ENCODE measurements at regions of chr1 and their contacts with region 1.

Region 1: DNA sequence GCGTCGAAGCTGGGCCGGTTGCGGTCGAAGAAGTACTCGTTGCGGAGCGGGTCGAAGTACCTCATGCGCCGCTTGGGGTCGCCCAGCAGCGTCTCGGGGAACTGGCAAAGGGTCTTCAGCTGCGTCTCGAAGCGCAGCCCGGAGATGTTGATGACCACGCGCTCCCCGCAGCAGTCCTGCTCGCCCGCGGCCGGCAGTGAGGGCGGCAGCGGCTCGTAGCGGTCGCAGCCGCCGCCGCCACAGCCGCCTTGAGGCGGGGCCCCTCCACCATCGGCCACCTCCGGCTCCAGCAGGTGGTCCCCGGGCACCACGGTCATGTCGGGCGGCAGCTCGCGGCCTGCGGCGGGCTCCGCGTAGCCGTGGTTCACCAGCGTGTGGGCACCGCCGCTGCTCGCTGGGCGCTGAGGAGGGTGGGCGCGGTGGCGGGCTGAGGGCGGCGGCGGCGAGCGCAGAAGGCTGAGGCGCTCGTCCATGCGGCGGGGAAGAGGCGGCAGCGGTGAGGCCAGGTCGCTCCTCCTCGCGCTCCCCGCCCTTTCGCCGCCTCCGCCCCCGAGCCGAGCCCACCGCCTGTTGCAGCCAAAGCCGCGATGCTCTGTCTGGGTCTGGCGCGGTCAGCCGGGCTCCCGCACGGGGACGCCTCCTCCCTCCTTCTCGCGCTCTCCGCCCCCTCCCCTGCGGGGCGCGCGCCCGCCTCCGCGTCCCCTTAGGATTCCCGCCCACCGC is at the start of gene KCNA3:
- DNase-seq: peak; percentile 52 to 87 (median 73)
- ATAC-seq: peak; percentile 42
- H3K4me3 ChIP-seq: peak within 1 kb of the TSS; percentile 75 to 97
- H3K4me3 Mint-ChIP-seq: peak within 1 kb of the TSS; percentile 100
- H3K27ac ChIP-seq: peak within 1 kb of the TSS; percentile 93 to 95
- H3K27ac Mint-ChIP-seq: peak within 1 kb of the TSS; percentile 99
- H3K4me1 ChIP-seq: peaks cover 22% of the 10 kb centered on the region
- H3K4me1 Mint-ChIP-seq: peaks cover 40% of the 10 kb centered on the region
- H3K27me3 ChIP-seq: no peaks in the 10 kb centered on the region
- H3K27me3 Mint-ChIP-seq: no peaks in the 10 kb centered on the region
- CTCF ChIP-seq: peak; percentile 28
- total RNA-seq, gene KCNA3: 83.6 to 85.1 TPM

Region 2: GRCh38 chr1:110619412-110620249 is 54.9 kb before region 1 on chr1:
- CTCF ChIA-PET with region 1: interaction called, 58 read pairs
- POLR2A ChIA-PET with region 1: interaction called, 24 read pairs
- intact Hi-C with region 1: loop called in 1 of 2 experiments (anchors 1 kb)
- DNase-seq: peak; percentile 79 to 96 (median 90)
- ATAC-seq: peak; percentile 84
- H3K4me3 ChIP-seq: peak overlapping the region; percentile 62 to 65
- H3K4me3 Mint-ChIP-seq: peak overlapping the region; percentile 89
- H3K27ac ChIP-seq: peak overlapping the region; percentile 58 to 73
- H3K27ac Mint-ChIP-seq: peak overlapping the region; percentile 89
- H3K4me1 ChIP-seq: peaks cover 28% of the 10 kb centered on the region
- H3K4me1 Mint-ChIP-seq: peaks cover 41% of the 10 kb centered on the region
- H3K27me3 ChIP-seq: peaks cover 0 to 4% of the 10 kb centered on the region in 2 experiments
- H3K27me3 Mint-ChIP-seq: no peaks in the 10 kb centered on the region
- CTCF ChIP-seq: peak; percentile 97

Region 3: GRCh38 chr1:110657351-110657750 is 17.1 kb before region 1 on chr1:
- CTCF ChIA-PET with region 1: interaction called, 5 read pairs
- POLR2A ChIA-PET with region 1: interaction called, 5 read pairs
- intact Hi-C with region 1: loop called in 1 of 2 experiments (anchors 1 kb)
- DNase-seq: no peak
- ATAC-seq: no peak
- H3K4me3 ChIP-seq: no peak overlapping the region
- H3K4me3 Mint-ChIP-seq: no peak overlapping the region
- H3K27ac ChIP-seq: no peak overlapping the region
- H3K27ac Mint-ChIP-seq: peak overlapping the region; percentile 27
- H3K4me1 ChIP-seq: peaks cover 9% of the 10 kb centered on the region
- H3K4me1 Mint-ChIP-seq: peaks cover 65% of the 10 kb centered on the region
- H3K27me3 ChIP-seq: no peaks in the 10 kb centered on the region
- H3K27me3 Mint-ChIP-seq: no peaks in the 10 kb centered on the region
- CTCF ChIP-seq: no peak

Region 4: DNA sequence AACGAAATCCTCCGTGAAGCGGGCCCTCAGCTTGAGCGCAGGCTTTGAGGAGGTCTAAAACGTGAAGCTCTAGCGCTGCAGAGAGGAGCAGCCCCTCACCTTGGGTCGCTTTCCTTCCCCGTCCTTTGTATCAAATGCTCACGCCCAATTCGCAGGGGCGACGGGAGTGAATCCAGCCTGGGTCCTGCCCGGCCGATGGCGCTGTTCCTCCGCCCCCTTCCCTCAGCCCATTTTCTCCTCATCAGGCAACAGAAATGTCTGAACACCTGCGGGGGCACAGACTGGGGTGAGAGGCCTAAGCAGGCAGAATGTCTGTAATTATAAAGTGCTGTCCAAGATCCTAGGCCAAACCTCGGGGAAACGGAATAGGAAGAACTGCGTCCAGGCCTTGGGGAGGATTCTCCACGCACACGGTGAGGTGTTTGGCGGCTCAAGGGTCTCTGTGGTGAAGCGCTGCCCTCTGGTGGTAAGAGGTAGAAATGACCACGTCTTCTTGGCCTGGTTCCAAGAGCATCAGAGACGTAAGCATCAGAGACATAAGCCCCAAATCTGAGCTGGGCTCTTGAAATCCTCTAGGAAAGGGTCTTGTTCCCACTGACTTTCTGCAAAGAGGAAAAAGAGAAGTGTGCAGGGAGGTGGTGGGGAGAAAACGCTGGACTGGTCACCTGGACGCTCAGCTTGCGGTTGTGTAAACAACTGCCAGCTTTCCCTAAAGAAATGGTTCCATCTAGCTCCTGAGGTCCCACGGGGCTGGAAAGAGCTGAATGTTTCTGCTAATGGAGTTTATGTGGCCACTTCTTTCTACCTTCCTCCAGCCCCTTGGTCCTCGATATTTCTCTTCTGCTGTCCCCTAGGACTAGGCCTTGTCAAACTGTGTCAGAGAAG is 106.3 kb after region 1 on chr1:
- CTCF ChIA-PET with region 1: interaction called, 6 read pairs
- POLR2A ChIA-PET with region 1: interaction called, 3 read pairs
- intact Hi-C with region 1: loop called in 1 of 2 experiments (anchors 5 kb)
- DNase-seq: peak; percentile 59 to 88 (median 76)
- ATAC-seq: peak; percentile 81
- H3K4me3 ChIP-seq: no peak overlapping the region
- H3K4me3 Mint-ChIP-seq: no peak overlapping the region
- H3K27ac ChIP-seq: no peak overlapping the region
- H3K27ac Mint-ChIP-seq: no peak overlapping the region
- H3K4me1 ChIP-seq: peaks cover 39% of the 10 kb centered on the region
- H3K4me1 Mint-ChIP-seq: peaks cover 46% of the 10 kb centered on the region
- H3K27me3 ChIP-seq: no peaks in the 10 kb centered on the region
- H3K27me3 Mint-ChIP-seq: peaks cover 5% of the 10 kb centered on the region
- CTCF ChIP-seq: peak; percentile 81

Region 5: GRCh38 chr1:111197598-111198284 is 523.2 kb after region 1 on chr1:
- CTCF ChIA-PET with region 1: no interaction called
- POLR2A ChIA-PET with region 1: no interaction called
- intact Hi-C with region 1: loop called (anchors 5 to 10 kb)
- DNase-seq: peak; percentile 54 to 90 (median 73)
- ATAC-seq: peak; percentile 47
- H3K4me3 ChIP-seq: peak overlapping the region; percentile 74 to 93
- H3K4me3 Mint-ChIP-seq: peak overlapping the region; percentile 94
- H3K27ac ChIP-seq: peak overlapping the region; percentile 55 to 84
- H3K27ac Mint-ChIP-seq: peak overlapping the region; percentile 97
- H3K4me1 ChIP-seq: peaks cover 62% of the 10 kb centered on the region
- H3K4me1 Mint-ChIP-seq: peaks cover 75% of the 10 kb centered on the region
- H3K27me3 ChIP-seq: no peaks in the 10 kb centered on the region
- H3K27me3 Mint-ChIP-seq: no peaks in the 10 kb centered on the region
- CTCF ChIP-seq: no peak

Region 6: DNA sequence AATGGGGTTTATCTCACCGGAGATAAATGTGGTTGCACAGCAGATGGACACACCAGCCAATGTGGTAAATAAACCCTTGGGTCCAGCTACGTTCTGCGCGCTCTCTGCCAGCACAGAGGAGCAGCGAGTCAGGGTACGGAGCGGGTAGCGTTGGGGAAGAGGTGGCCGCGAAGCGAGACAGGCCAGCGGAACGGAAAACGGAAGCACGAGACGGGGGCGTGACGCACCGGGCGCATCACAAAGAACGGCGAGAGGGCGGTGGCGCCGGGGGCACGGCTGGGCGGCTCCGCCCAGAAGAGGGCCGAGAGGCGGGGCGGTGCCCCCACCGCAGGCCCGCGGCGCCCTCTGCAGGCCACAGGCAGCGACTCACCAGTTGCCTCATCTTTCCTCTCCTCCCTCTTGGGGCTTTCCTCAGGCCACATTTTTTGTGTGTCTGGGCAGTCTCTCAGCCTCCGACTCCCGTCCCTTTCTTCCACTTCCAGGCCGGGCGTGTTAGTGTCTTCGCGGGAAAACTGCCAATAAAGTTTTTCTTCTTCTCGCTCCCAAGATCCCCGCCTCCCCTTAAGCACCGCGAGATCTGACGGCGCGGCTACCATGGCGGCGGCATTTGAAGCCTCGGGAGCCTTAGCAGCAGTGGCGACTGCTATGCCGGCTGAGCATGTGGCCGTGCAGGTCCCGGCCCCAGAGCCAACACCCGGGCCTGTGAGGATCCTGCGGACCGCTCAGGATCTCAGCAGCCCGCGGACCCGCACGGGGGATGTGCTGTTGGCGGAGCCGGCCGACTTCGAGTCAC is 1081.0 kb after region 1 on chr1 and contains the start of gene DDX20:
- CTCF ChIA-PET with region 1: no interaction called
- POLR2A ChIA-PET with region 1: no interaction called
- intact Hi-C with region 1: loop called (anchors 5 to 10 kb)
- DNase-seq: peak; percentile 86 to 97 (median 93)
- ATAC-seq: peak; percentile 89
- H3K4me3 ChIP-seq: peak within 1 kb of the TSS; percentile 75 to 89
- H3K4me3 Mint-ChIP-seq: peak within 1 kb of the TSS; percentile 90
- H3K27ac ChIP-seq: peak within 1 kb of the TSS; percentile 93 to 96
- H3K27ac Mint-ChIP-seq: peak within 1 kb of the TSS; percentile 98
- H3K4me1 ChIP-seq: peaks cover 19% of the 10 kb centered on the region
- H3K4me1 Mint-ChIP-seq: peaks cover 43% of the 10 kb centered on the region
- H3K27me3 ChIP-seq: no peaks in the 10 kb centered on the region
- H3K27me3 Mint-ChIP-seq: no peaks in the 10 kb centered on the region
- CTCF ChIP-seq: peak; percentile 83
- total RNA-seq, gene DDX20: 35.4 to 35.9 TPM